Activated CD4-positive, alpha-beta T cell treated with anti-CD3 and anti-CD28 coated beads for 36 hours (primary cell): ENCODE measurements at regions of chr12 and their contacts with region 1.

Region 1: GRCh38 chr12:117874842-117875434 is 93.9 kb downstream of the KSR2 start:
- DNase-seq: peak; percentile 84
- ATAC-seq: peak; percentile 70
- H3K4me3 Mint-ChIP-seq: no peak overlapping the region
- H3K27ac Mint-ChIP-seq: no peak overlapping the region
- H3K4me1 Mint-ChIP-seq: peaks cover 12% of the 10 kb centered on the region
- H3K27me3 Mint-ChIP-seq: peaks cover 11% of the 10 kb centered on the region

Region 2: DNA sequence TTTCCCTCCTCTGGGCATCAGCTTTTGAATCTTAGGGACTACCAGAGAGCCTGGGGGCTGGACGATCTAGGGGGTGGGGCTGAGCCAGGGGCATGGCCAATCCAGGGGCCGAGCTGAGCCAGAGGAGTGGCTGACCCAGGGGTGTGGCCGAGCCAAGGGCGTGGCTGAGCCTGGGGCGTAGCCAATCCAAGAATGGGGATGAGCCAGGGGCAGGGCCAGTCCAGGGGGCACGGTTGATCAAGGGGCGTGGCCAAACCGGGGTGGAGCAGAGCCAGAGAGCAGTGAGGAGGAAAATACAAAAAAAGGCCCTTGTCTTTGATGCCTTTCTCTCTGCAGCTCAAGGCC is 294.2 kb before region 1 on chr12:
- CTCF ChIA-PET with region 1: no interaction called
- POLR2A ChIA-PET with region 1: no interaction called
- intact Hi-C with region 1: no loop called
- DNase-seq: peak; percentile 5
- ATAC-seq: no peak
- H3K4me3 Mint-ChIP-seq: no peak overlapping the region
- H3K27ac Mint-ChIP-seq: no peak overlapping the region
- H3K4me1 Mint-ChIP-seq: no peaks in the 10 kb centered on the region
- H3K27me3 Mint-ChIP-seq: no peaks in the 10 kb centered on the region

Region 3: DNA sequence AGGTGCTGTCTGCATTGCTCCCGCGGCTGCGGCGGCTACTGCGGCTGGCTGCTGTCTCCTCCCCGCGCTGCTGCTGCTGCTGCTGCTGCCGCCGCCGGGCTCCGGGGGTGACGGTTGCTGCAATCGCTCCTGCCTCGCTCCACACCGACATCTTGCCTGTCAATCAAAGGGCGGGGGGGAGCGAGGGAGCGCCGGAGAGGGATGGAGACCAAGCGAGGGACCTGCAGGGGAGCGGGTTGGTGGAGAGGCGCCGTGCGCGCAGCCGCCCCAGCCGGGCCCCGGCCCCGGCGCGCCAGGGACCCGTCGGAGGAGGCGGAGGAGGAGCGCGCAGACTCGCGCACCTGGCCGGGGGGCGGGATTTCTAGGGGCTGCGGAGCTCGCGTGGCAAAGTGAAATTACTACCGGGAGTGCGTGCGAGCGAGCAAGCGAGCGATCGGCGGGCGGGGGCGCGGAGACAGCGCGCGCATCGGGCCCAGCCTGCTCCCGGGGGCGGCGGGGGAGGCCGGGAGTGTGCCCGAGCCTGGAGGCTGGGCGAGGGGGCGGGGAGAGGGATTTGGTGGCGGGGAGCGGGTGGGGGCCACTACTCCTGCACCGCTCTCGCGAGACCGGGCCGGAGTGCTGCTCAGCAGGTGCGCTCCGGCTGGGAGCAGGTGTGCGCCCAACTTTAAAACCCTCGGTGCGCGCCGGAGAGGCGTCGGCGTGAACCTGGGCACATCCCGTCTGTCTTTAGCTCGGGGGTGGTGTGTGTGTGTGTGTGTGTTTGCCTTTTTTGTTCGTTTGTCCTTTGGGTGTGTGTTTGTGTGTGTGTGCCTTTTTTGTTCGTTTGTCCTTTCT is 94.1 kb after region 1 on chr12 and contains the start of gene KSR2:
- CTCF ChIA-PET with region 1: no interaction called
- POLR2A ChIA-PET with region 1: no interaction called
- intact Hi-C with region 1: loop called in 1 of 2 experiments (anchors 2 kb)
- DNase-seq: peak; percentile 81
- ATAC-seq: peak; percentile 88
- H3K4me3 Mint-ChIP-seq: peak within 1 kb of the TSS; percentile 74
- H3K27ac Mint-ChIP-seq: peak within 1 kb of the TSS; percentile 26
- H3K4me1 Mint-ChIP-seq: peaks cover 9% of the 10 kb centered on the region
- H3K27me3 Mint-ChIP-seq: peaks cover 57% of the 10 kb centered on the region
- total RNA-seq, gene KSR2: 0.14 to 0.16 TPM

Region 4: GRCh38 chr12:118035246-118036041 is 160.5 kb after region 1 on chr12:
- CTCF ChIA-PET with region 1: interaction called, 12 read pairs
- POLR2A ChIA-PET with region 1: no interaction called
- intact Hi-C with region 1: loop called (anchors 5 kb)
- DNase-seq: peak; percentile 60
- ATAC-seq: peak; percentile 89
- H3K4me3 Mint-ChIP-seq: peak overlapping the region; percentile 22
- H3K27ac Mint-ChIP-seq: peak overlapping the region; percentile 89
- H3K4me1 Mint-ChIP-seq: peaks cover 55% of the 10 kb centered on the region
- H3K27me3 Mint-ChIP-seq: no peaks in the 10 kb centered on the region

Region 5: GRCh38 chr12:118061011-118061875 is 186.3 kb after region 1 on chr12 and contains the start of gene WSB2:
- CTCF ChIA-PET with region 1: interaction called, 11 read pairs
- POLR2A ChIA-PET with region 1: interaction called, 7 read pairs
- intact Hi-C with region 1: no loop called
- DNase-seq: peak; percentile 73
- ATAC-seq: peak; percentile 8
- H3K4me3 Mint-ChIP-seq: peak within 1 kb of the TSS; percentile 88
- H3K27ac Mint-ChIP-seq: peak within 1 kb of the TSS; percentile 97
- H3K4me1 Mint-ChIP-seq: peaks cover 47% of the 10 kb centered on the region
- H3K27me3 Mint-ChIP-seq: peaks cover 2% of the 10 kb centered on the region
- total RNA-seq, gene WSB2: 57.7 to 58.2 TPM

Region 6: DNA sequence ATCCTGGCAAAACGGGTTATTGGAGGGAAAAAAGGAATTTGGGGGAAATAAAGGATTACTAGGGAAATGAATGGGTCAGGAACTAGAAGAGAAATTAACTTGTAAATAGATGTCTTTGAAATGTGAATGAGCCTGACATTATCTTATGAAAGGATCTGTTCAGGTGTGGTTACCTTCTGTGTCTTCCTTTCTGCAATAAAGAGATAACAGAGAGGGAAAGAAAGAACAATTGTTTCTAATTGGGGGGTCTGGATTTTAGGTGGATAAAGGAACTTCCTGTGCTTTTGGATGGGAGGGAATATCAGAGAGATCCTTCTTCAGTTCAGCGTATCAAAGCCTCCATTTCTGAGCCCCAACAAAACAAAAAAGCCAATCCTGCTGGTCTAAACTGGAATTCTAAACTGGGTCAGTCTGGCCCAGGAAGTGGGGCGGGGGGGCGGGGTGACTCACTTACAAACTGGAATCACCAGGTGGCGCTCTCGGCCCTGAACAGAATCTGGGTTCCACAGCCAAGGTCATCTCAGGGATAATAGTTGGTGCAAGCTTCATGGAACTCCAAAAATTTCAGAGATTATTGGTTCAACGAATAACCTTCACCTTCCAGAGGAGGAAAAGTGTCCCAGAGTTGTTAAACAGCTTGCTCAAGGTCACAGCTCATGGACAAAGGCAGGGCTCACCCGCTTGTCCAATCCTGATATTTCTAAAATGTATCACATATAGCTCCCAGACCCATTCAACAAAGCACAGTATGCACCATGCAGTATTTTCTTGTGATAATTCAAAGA is 245.8 kb after region 1 on chr12:
- CTCF ChIA-PET with region 1: interaction called, 4 read pairs
- POLR2A ChIA-PET with region 1: no interaction called
- intact Hi-C with region 1: loop called in 1 of 2 experiments (anchors 5 kb)
- DNase-seq: peak; percentile 82
- ATAC-seq: peak; percentile 75
- H3K4me3 Mint-ChIP-seq: no peak overlapping the region
- H3K27ac Mint-ChIP-seq: peak overlapping the region; percentile 77
- H3K4me1 Mint-ChIP-seq: peaks cover 8% of the 10 kb centered on the region
- H3K27me3 Mint-ChIP-seq: no peaks in the 10 kb centered on the region

Region 7: GRCh38 chr12:118164798-118165486 is 290.0 kb after region 1 on chr12:
- CTCF ChIA-PET with region 1: interaction called, 4 read pairs
- POLR2A ChIA-PET with region 1: no interaction called
- intact Hi-C with region 1: loop called in 1 of 2 experiments (anchors 10 kb)
- DNase-seq: peak; percentile 49
- ATAC-seq: no peak
- H3K4me3 Mint-ChIP-seq: no peak overlapping the region
- H3K27ac Mint-ChIP-seq: no peak overlapping the region
- H3K4me1 Mint-ChIP-seq: peaks cover 37% of the 10 kb centered on the region
- H3K27me3 Mint-ChIP-seq: no peaks in the 10 kb centered on the region